ENCODE measurements at regions of chr15 and their contacts with region 1.

Region 1: DNA sequence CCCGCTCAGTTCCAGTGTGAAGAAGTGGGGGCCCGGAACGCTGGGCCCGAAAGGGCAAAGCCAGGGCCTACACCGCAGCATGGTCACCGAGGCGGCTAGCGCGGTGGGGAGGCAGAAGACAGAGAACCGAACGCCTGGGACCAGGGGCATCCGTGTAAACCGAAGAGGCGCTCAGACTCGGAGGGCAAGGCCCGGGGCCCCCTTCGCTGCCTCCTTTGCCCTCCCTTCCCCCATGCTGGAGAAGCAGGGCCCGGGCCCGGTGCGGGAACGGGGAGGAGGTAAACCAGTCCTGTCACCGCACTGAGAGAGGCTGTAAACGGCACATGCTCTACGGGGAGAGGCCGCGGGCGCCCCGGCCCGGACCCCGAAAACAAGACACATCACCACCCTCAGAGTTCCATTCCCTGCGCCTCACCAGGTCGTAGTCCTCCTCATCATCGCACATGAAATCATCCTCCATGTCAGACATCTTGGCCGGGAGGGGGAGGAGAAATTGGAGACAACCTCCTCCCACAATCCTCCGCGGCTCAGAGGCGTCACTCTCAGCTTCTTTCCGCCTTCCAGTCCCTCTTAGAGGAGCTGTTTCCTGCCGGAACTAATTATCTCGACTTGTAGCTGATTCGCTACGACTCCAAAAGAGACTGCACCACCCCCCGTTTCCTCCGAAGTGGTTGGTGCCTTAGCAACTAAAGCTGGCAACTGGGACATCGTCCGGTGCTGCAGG is at the start of gene COPS2:
- DNase-seq: peak; percentile 98
- H3K4me3 Mint-ChIP-seq: peak within 1 kb of the TSS; percentile 99
- H3K27ac Mint-ChIP-seq: peak within 1 kb of the TSS; percentile 99
- H3K4me1 Mint-ChIP-seq: peaks cover 40% of the 10 kb centered on the region
- H3K27me3 Mint-ChIP-seq: peaks cover 1% of the 10 kb centered on the region
- total RNA-seq, gene COPS2: 98.6 and 99.0 TPM in 2 replicates

Region 2: GRCh38 chr15:48810414-48811317 is 344.6 kb before region 1 on chr15 and contains the start of gene CEP152:
- intact Hi-C with region 1: loop called (anchors 1 kb)
- DNase-seq: peak; percentile 99
- H3K4me3 Mint-ChIP-seq: peak within 1 kb of the TSS; percentile 96
- H3K27ac Mint-ChIP-seq: peak within 1 kb of the TSS; percentile 96
- H3K4me1 Mint-ChIP-seq: peaks cover 35% of the 10 kb centered on the region
- H3K27me3 Mint-ChIP-seq: peaks cover 17% of the 10 kb centered on the region
- total RNA-seq, gene CEP152: 32.0 and 32.2 TPM in 2 replicates

Region 3: GRCh38 chr15:49169880-49170597 is 14.8 kb after region 1 on chr15 and contains the start of gene GALK2:
- intact Hi-C with region 1: loop called (anchors 1 kb)
- DNase-seq: peak; percentile 95
- H3K4me3 Mint-ChIP-seq: peak within 1 kb of the TSS; percentile 100
- H3K27ac Mint-ChIP-seq: peak within 1 kb of the TSS; percentile 99
- H3K4me1 Mint-ChIP-seq: peaks cover 26% of the 10 kb centered on the region
- H3K27me3 Mint-ChIP-seq: no peaks in the 10 kb centered on the region
- total RNA-seq, gene GALK2: 24.7 and 25.5 TPM in 2 replicates

Measured in activated CD4-positive, alpha-beta T cell treated with anti-CD3 and anti-CD28 coated beads, Interleukin-2, amount 10 ng/mL, durations not matched to agents 24 days and 14 days (primary cell).